Naive thymus-derived CD4-positive, alpha-beta T cell (primary cell): ENCODE measurements at regions of chr6 and their contacts with region 1.

Region 1: DNA sequence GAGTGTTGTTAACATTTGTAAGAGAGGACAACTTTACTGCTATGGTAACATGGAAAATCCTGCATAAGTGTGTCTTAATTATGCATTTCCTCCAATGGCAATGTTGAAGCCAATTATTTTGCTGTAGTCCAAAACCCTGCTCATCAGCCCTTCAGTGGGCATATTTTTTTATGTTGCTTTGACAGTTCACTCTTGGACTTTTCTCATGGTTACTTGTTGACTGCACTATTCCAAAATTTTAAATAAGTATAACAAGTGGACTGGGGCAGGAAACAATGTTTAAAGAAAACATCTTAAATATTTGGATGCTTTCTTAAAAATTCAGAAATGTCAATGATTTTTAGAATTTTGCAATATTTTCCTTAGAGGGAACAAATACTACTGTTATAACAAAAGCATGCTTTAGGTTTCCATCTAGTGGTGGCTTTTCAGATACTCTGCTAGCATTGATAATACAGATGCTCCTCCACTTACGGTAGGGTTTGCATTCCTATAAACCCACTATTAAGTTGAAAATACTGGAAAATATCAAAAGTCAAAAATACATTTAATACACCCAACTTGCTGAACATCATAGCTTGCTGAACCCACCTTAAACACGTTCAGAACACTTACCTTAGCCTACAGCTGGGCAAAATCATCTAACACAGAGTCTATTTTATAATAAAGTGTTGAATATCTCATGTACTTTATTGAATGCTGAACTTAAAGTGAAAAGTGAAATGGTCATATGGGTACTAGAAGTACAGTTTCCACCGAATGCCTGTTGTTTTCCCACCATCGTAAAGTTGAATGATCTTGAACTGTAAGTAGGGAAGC is 86.4 kb downstream of the ADGRG6 start:
- DNase-seq: peak in 7 of 9 donors; percentile 22 to 50 (median 26)
- ATAC-seq: peak; percentile 67
- H3K4me3 ChIP-seq: no peak overlapping the region
- H3K4me3 Mint-ChIP-seq: no peak overlapping the region
- H3K27ac ChIP-seq: no peak overlapping the region
- H3K27ac Mint-ChIP-seq: no peak overlapping the region
- H3K4me1 ChIP-seq: peaks cover 0 to 9% of the 10 kb centered on the region in 2 donors
- H3K4me1 Mint-ChIP-seq: peaks cover 0 to 28% (median 9%) of the 10 kb centered on the region in 7 donors
- H3K27me3 ChIP-seq: no peaks in the 10 kb centered on the region
- H3K27me3 Mint-ChIP-seq: peaks cover 0 to 49% (median 0%) of the 10 kb centered on the region in 5 donors

Region 2: GRCh38 chr6:141988954-141989705 is 399.1 kb before region 1 on chr6:
- CTCF ChIA-PET with region 1: no interaction called
- POLR2A ChIA-PET with region 1: no interaction called
- intact Hi-C with region 1: loop called in 1 of 2 experiments (anchors 1 kb)
- DNase-seq: peak in 6 of 9 donors; percentile 4 to 30 (median 13)
- ATAC-seq: peak; percentile 50
- H3K4me3 ChIP-seq: no peak overlapping the region
- H3K4me3 Mint-ChIP-seq: no peak overlapping the region
- H3K27ac ChIP-seq: no peak overlapping the region
- H3K27ac Mint-ChIP-seq: no peak overlapping the region
- H3K4me1 ChIP-seq: no peaks in the 10 kb centered on the region
- H3K4me1 Mint-ChIP-seq: no peaks in the 10 kb centered on the region
- H3K27me3 ChIP-seq: no peaks in the 10 kb centered on the region
- H3K27me3 Mint-ChIP-seq: peaks cover 0 to 20% (median 8%) of the 10 kb centered on the region in 5 donors

Region 3: DNA sequence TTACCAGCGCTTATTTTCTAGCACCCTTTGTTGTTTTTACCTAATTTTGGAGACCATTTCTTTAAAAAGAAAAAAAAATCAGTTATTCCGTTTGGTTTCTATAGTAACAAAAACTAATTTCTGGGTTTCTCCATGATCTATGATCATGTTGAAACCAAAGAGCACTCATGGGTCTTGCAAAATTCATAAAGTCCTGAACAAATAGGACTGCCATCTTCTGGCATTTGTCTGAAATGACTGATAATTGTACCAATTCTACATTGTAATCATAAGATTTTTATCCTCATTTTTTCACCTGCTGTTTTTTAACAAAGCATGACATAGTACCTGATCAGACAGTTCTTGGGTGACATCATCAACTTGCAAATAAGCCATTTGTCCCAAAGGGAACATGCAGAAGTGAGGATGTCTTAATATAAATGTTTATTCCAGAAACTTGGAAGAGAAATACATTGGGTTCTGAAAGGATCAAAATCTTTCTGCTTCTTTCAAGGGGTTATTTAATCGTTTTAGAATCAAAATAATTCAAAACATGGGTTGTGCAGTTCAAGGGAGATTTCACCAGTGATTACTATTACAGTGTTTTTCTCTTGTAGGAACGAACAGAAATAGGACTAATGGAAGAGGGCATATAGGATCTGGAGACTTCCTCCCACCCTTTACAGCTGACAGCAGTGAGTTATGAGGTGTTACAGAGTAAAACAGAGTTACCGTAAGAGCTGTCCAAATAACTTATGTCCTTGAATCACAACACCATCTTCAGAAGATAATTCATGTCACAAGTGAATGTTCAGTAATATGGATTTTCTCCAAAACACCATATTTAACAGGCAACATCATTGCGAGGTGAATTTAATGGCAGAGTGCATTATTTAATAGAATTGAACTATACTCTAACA is 342.6 kb before region 1 on chr6:
- CTCF ChIA-PET with region 1: no interaction called
- POLR2A ChIA-PET with region 1: no interaction called
- intact Hi-C with region 1: no loop called
- DNase-seq: no peak
- ATAC-seq: no peak
- H3K4me3 ChIP-seq: no peak overlapping the region
- H3K4me3 Mint-ChIP-seq: no peak overlapping the region
- H3K27ac ChIP-seq: no peak overlapping the region
- H3K27ac Mint-ChIP-seq: no peak overlapping the region
- H3K4me1 ChIP-seq: no peaks in the 10 kb centered on the region
- H3K4me1 Mint-ChIP-seq: no peaks in the 10 kb centered on the region
- H3K27me3 ChIP-seq: no peaks in the 10 kb centered on the region
- H3K27me3 Mint-ChIP-seq: peaks cover 0 to 35% (median 26%) of the 10 kb centered on the region in 5 donors

Region 4: GRCh38 chr6:142155895-142156757 is 232.1 kb before region 1 on chr6:
- CTCF ChIA-PET with region 1: interaction called, 7 read pairs
- POLR2A ChIA-PET with region 1: no interaction called
- intact Hi-C with region 1: loop called (anchors 1 kb)
- DNase-seq: peak in 6 of 9 donors; percentile 8 to 51 (median 39)
- ATAC-seq: peak; percentile 80
- H3K4me3 ChIP-seq: no peak overlapping the region
- H3K4me3 Mint-ChIP-seq: peak overlapping the region in 9 of 10 donors; percentile 1 to 59 (median 20)
- H3K27ac ChIP-seq: peak overlapping the region; percentile 18
- H3K27ac Mint-ChIP-seq: peak overlapping the region; percentile 19 to 89 (median 46)
- H3K4me1 ChIP-seq: peaks cover 0 to 6% of the 10 kb centered on the region in 2 donors
- H3K4me1 Mint-ChIP-seq: peaks cover 26 to 79% (median 64%) of the 10 kb centered on the region in 7 donors
- H3K27me3 ChIP-seq: no peaks in the 10 kb centered on the region
- H3K27me3 Mint-ChIP-seq: no peaks in the 10 kb centered on the region

Region 5: DNA sequence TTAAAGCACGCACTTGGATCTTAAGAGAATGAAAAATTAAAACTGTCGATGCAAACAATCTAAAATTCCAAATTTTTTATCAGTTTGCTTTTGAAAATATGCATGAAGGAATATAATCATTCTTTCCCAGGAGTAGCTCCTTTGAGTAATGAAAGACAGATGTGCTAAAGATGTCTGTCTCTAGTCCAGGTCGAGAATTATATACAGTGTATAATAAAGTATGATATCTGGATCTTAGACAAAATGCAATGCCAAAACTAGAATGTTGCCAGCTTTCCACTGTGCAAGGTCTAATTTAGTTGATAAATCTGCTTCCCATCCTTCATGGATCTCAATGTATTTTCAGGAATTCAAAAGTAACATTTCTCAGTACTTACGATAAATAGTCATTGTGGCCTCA is 151.5 kb before region 1 on chr6:
- CTCF ChIA-PET with region 1: interaction called, 7 read pairs
- POLR2A ChIA-PET with region 1: no interaction called
- intact Hi-C with region 1: loop called in 1 of 2 experiments (anchors 1 kb)
- DNase-seq: no peak
- ATAC-seq: no peak
- H3K4me3 ChIP-seq: no peak overlapping the region
- H3K4me3 Mint-ChIP-seq: no peak overlapping the region
- H3K27ac ChIP-seq: no peak overlapping the region
- H3K27ac Mint-ChIP-seq: no peak overlapping the region
- H3K4me1 ChIP-seq: no peaks in the 10 kb centered on the region
- H3K4me1 Mint-ChIP-seq: peaks cover 0 to 19% (median 15%) of the 10 kb centered on the region in 7 donors
- H3K27me3 ChIP-seq: no peaks in the 10 kb centered on the region
- H3K27me3 Mint-ChIP-seq: peaks cover 0 to 5% (median 0%) of the 10 kb centered on the region in 5 donors

Region 6: GRCh38 chr6:142301651-142302370 is 86.4 kb before region 1 on chr6 and contains the start of gene ADGRG6:
- CTCF ChIA-PET with region 1: no interaction called
- POLR2A ChIA-PET with region 1: no interaction called
- intact Hi-C with region 1: loop called in 1 of 2 experiments (anchors 2 kb)
- DNase-seq: peak; percentile 10 to 50 (median 42)
- ATAC-seq: peak; percentile 85
- H3K4me3 ChIP-seq: peak within 1 kb of the TSS; percentile 53
- H3K4me3 Mint-ChIP-seq: peak within 1 kb of the TSS; percentile 78 to 93 (median 85)
- H3K27ac ChIP-seq: no peak within 1 kb of the TSS
- H3K27ac Mint-ChIP-seq: peak within 1 kb of the TSS in 1 of 9 donors; percentile 26
- H3K4me1 ChIP-seq: peaks cover 0 to 7% of the 10 kb centered on the region in 2 donors
- H3K4me1 Mint-ChIP-seq: peaks cover 3 to 21% (median 15%) of the 10 kb centered on the region in 7 donors
- H3K27me3 ChIP-seq: peaks cover 0 to 4% of the 10 kb centered on the region in 2 donors
- H3K27me3 Mint-ChIP-seq: peaks cover 0 to 47% (median 15%) of the 10 kb centered on the region in 5 donors
- total RNA-seq, gene ADGRG6: 0.24 to 3.6 (median 0.67) TPM in 4 of 5 experiments, not detected in the other

Region 7: DNA sequence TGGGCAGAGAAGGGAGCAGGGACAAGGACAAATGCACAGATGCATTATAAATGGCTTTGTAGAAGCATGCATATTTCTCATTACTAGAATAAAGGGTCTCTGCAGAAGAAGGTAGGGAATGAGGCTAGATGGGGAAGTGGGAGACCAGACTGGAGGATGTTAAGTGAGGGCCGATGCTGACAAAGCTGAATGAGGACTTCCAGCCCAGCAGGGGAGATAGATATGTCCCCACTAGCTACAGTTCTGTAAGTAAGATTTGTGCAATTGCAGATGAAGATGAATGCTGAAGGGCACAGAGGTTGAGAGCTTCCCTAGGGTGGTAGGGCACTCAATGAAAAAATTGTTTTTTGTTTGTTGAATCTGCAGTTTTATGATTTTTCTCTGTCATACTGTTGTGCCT is 69.5 kb before region 1 on chr6:
- CTCF ChIA-PET with region 1: no interaction called
- POLR2A ChIA-PET with region 1: no interaction called
- intact Hi-C with region 1: loop called in 1 of 2 experiments (anchors 5 kb)
- DNase-seq: no peak
- ATAC-seq: no peak
- H3K4me3 ChIP-seq: no peak overlapping the region
- H3K4me3 Mint-ChIP-seq: no peak overlapping the region
- H3K27ac ChIP-seq: no peak overlapping the region
- H3K27ac Mint-ChIP-seq: no peak overlapping the region
- H3K4me1 ChIP-seq: no peaks in the 10 kb centered on the region
- H3K4me1 Mint-ChIP-seq: no peaks in the 10 kb centered on the region
- H3K27me3 ChIP-seq: no peaks in the 10 kb centered on the region
- H3K27me3 Mint-ChIP-seq: peaks cover 0 to 18% (median 4%) of the 10 kb centered on the region in 5 donors

Region 8: DNA sequence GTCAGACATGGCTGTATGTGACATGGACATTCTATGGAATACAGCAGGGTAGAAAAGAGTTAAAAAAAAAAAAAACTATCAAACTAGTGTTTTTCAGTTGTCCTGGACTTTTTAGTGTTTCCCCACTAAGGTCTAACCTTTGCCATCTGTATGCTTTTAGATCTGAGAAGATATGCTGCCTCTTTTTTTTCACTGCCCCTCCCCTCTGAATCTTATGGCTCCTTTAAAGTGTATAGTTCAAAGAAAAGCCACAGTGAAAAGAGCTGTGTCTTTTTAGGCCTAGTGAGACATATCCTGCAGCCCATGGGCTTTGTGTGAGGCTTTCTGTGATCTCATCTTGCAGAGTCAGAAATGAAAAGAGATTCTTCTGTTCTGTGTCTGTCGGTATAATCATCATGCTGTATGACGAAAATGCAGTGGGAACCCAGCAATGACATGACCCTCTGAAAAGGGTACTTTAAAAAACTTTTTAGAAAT is 57.1 kb before region 1 on chr6:
- CTCF ChIA-PET with region 1: no interaction called
- POLR2A ChIA-PET with region 1: no interaction called
- intact Hi-C with region 1: loop called in 1 of 2 experiments (anchors 2 kb)
- DNase-seq: peak in 7 of 9 donors; percentile 51 to 69 (median 60)
- ATAC-seq: peak; percentile 94
- H3K4me3 ChIP-seq: no peak overlapping the region
- H3K4me3 Mint-ChIP-seq: peak overlapping the region in 4 of 10 donors; percentile 23 to 45 (median 33)
- H3K27ac ChIP-seq: no peak overlapping the region
- H3K27ac Mint-ChIP-seq: peak overlapping the region in 5 of 9 donors; percentile 43 to 73 (median 61)
- H3K4me1 ChIP-seq: peaks cover 0 to 11% of the 10 kb centered on the region in 2 donors
- H3K4me1 Mint-ChIP-seq: peaks cover 4 to 21% (median 12%) of the 10 kb centered on the region in 7 donors
- H3K27me3 ChIP-seq: no peaks in the 10 kb centered on the region
- H3K27me3 Mint-ChIP-seq: peaks cover 0 to 21% (median 0%) of the 10 kb centered on the region in 5 donors

Region 9: DNA sequence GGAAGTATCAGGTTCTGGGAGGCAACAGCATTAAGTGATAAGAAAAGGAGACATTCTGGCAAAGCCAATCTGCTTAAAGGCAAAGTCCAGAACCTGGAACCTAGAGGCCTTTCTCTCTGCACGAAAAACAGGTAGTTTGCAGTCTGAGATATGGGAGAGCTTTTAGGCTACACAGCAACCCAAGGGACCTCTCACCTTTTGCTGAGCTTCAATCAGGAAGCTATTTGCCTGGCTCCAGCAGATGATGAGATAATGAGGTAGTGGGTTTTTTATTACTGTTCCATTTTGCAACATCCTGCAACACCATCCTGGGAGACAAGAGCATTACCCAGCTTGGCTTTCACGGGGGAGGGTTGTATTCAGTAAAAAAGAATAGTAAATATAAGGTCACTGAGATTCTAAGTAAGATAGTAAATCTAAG is 56.7 kb after region 1 on chr6:
- CTCF ChIA-PET with region 1: no interaction called
- POLR2A ChIA-PET with region 1: no interaction called
- intact Hi-C with region 1: no loop called
- DNase-seq: no peak
- ATAC-seq: no peak
- H3K4me3 ChIP-seq: no peak overlapping the region
- H3K4me3 Mint-ChIP-seq: no peak overlapping the region
- H3K27ac ChIP-seq: no peak overlapping the region
- H3K27ac Mint-ChIP-seq: no peak overlapping the region
- H3K4me1 ChIP-seq: no peaks in the 10 kb centered on the region
- H3K4me1 Mint-ChIP-seq: no peaks in the 10 kb centered on the region
- H3K27me3 ChIP-seq: no peaks in the 10 kb centered on the region
- H3K27me3 Mint-ChIP-seq: peaks cover 0 to 9% (median 0%) of the 10 kb centered on the region in 5 donors

Region 10: DNA sequence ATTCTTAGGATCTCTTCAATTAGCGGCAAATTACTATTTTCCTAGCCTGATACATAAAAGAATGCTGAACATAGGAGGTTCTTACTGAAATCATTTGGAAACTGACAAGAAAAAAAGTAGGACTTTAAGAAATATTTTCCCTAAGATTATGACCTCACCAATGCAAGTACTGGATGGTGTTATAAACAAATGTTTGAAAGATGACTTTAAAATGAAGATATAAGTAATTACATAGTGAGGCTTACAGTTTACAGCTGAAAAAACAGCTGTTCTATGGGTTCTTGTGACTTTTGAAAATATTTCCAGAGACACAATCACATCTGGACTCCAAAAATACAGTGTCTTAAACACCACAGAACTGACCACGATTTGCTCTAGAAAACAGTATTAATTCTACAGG is 997.4 kb after region 1 on chr6:
- CTCF ChIA-PET with region 1: no interaction called
- POLR2A ChIA-PET with region 1: no interaction called
- intact Hi-C with region 1: no loop called
- DNase-seq: no peak
- ATAC-seq: no peak
- H3K4me3 ChIP-seq: no peak overlapping the region
- H3K4me3 Mint-ChIP-seq: no peak overlapping the region
- H3K27ac ChIP-seq: no peak overlapping the region
- H3K27ac Mint-ChIP-seq: no peak overlapping the region
- H3K4me1 ChIP-seq: no peaks in the 10 kb centered on the region
- H3K4me1 Mint-ChIP-seq: no peaks in the 10 kb centered on the region
- H3K27me3 ChIP-seq: no peaks in the 10 kb centered on the region
- H3K27me3 Mint-ChIP-seq: peaks cover 0 to 6% (median 2%) of the 10 kb centered on the region in 5 donors